AG04449 (cell line): ENCODE measurements at regions of chr1 and their contacts with region 1.

Region 1: DNA sequence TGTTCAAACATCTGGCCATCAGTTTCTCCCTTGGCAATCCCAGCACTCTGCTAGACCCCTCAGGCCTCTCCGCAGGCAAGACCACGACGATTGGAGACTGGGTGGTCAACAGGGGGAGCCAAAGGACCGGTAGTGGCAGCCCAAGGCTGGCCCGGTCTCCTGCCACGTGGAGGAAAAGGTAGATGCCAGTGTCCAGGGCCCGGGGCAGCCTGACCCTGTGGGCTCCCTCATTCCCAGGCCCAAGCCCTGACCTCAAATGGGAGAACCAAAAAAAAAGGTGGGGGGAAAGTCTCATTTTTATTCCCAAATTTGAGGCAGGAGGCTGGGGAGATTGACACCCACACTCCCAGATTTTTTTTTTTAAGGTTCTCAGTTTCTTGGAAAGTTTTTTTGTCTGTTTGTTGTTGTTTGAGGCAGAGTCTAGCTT is 24.8 kb downstream of the S100A6 start:
- DNase-seq: no peak
- H3K4me3 ChIP-seq: no peak overlapping the region
- CTCF ChIP-seq: peak; percentile 95

Region 2: GRCh38 chr1:153483776-153484175 is 27.2 kb before region 1 on chr1:
- CTCF ChIA-PET with region 1: no interaction called
- POLR2A ChIA-PET with region 1: no interaction called
- DNase-seq: no peak
- H3K4me3 ChIP-seq: no peak overlapping the region
- CTCF ChIP-seq: no peak

Region 3: DNA sequence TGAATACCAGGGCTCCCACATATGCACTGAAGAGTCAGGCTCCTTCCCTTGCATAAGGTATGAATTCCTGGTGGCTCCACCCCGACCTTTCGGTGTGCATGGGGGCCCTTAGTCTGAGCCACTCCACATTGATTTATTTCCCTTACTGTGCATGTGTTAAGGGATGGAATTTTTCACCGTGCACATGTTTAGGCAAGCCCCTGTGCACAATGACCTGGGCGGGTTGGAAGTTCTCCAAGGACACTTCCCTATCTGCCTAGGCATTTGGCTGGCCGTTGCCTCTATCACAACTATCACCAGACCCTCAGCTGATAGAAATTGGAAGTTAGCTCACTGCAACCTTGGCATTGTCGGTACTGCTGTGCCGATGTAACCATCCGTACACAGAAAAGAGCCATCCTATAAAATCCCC is 15.1 kb after region 1 on chr1:
- CTCF ChIA-PET with region 1: interaction called, 143 read pairs
- POLR2A ChIA-PET with region 1: no interaction called
- DNase-seq: no peak
- H3K4me3 ChIP-seq: no peak overlapping the region
- CTCF ChIP-seq: no peak

Region 4: DNA sequence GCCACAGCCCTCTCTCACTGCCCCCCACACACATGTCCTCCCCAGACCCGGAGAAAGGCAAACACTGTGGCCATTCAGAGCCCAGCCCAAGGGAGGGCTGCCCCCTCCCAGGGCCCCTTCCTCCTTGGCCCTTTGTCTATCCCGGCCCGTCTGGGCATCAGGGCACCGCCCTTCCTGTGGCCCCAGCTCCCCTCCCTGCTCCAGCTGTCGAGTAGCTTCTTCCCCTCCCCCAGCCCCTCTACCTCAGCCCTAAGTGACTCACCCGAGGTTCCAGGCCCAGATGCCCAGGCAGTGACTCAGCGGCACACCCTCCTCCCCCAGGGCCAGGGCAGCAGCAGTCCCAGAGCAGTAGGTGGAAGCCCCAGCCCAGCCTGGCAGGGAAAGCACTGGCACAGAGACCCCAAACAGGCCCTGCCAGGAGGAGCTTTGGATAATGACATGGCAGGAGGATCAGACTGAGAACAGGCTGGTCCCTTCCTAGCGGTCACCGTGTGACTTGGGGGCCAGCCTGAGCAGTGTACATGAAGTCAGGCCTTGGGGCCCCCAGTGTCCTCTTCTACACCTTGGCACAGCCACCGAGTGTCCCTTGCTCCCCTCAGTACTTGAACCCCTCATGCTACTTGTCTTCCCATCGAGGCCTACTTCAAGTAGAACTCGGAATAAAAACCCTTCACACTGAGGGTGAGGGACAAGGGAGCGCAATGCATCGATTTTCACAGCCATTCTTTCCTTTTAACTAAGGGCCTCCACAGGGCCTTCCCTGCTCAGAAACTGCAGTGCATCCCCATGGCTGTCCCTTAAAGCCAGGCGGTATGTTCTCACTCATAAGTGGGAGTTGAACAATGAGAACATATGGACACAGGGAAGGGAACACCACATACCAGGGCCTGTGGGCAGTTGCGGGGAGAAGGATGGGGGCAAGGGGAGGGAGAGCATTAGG is 55.7 kb after region 1 on chr1:
- CTCF ChIA-PET with region 1: interaction called, 401 read pairs
- POLR2A ChIA-PET with region 1: interaction called, 5 read pairs
- DNase-seq: peak; percentile 91
- H3K4me3 ChIP-seq: peak overlapping the region; percentile 23
- CTCF ChIP-seq: no peak

Region 5: GRCh38 chr1:153598309-153599172 is 87.5 kb after region 1 on chr1:
- CTCF ChIA-PET with region 1: interaction called, 13 read pairs
- POLR2A ChIA-PET with region 1: interaction called, 3 read pairs
- DNase-seq: no peak
- H3K4me3 ChIP-seq: no peak overlapping the region
- CTCF ChIP-seq: no peak

Region 6: DNA sequence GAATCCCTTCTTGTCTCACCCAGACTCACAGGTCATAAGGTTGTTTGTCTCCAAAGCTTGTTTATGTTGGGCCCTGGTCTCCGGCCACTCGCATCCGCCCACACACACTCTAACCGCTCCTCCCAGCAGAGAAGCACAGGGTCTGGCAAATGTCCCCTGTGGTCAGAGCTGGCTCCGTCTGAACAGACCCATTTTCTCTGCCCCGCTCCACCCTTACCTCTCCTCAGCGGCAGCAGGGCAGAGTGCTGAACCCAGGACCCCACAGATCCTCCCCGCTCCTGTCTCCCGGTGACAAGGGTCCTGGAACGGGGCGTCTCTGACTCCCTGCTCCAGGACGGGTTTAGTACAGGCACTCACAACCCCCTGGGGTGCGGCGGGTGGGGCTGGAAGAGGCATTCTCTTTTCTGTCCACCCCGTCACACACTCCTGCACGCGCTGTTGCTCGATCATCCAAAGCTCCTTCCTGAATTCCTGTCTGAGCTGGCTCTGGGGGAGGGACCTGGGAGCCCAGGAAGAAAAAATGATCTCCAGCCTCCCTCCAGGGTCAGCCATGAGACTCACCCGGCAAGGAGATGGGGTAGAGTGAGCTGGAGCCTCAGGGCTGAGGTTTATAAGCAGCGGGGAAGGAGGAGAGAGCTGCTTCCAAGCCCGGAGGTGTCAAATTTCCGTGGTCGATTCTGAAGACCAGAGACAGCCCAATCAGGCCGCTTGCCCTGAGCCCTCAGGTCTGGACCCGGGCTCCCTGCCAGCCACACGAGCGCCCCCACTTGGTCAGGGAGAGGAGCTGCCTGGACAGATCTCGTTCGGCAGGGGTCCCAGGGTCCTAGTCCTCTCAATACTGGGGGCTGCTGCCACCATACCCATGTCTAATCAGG is 116.2 kb after region 1 on chr1 and contains the start of gene S100A13:
- CTCF ChIA-PET with region 1: interaction called, 71 read pairs
- POLR2A ChIA-PET with region 1: interaction called, 4 read pairs
- DNase-seq: peak; percentile 70
- H3K4me3 ChIP-seq: peak within 1 kb of the TSS; percentile 84
- CTCF ChIP-seq: peak; percentile 84

Region 7: GRCh38 chr1:153749408-153750005 is 238.5 kb after region 1 on chr1:
- CTCF ChIA-PET with region 1: interaction called, 20 read pairs
- POLR2A ChIA-PET with region 1: no interaction called
- DNase-seq: peak; percentile 31
- H3K4me3 ChIP-seq: no peak overlapping the region
- CTCF ChIP-seq: peak; percentile 98

Region 8: GRCh38 chr1:153790966-153791647 is 280.1 kb after region 1 on chr1:
- CTCF ChIA-PET with region 1: no interaction called
- POLR2A ChIA-PET with region 1: no interaction called
- DNase-seq: peak; percentile 72
- H3K4me3 ChIP-seq: peak overlapping the region; percentile 32
- CTCF ChIP-seq: no peak